IMR-90 (cell line): ENCODE measurements at regions of chr5 and their contacts with region 1.

Region 1: GRCh38 chr5:168454489-168454888 is 31.8 kb upstream of the RARS1 start:
- DNase-seq: no peak
- ATAC-seq: no peak
- H3K4me3 ChIP-seq: no peak overlapping the region
- H3K27ac ChIP-seq: no peak overlapping the region
- H3K4me1 ChIP-seq: no peaks in the 10 kb centered on the region
- H3K27me3 ChIP-seq: no peaks in the 10 kb centered on the region
- CTCF ChIP-seq: no peak
- POLR2A ChIP-seq: no peak
- RAD21 ChIP-seq: no peak

Region 2: GRCh38 chr5:168472329-168472728 is 17.8 kb after region 1 on chr5:
- CTCF ChIA-PET with region 1: no interaction called
- POLR2A ChIA-PET with region 1: interaction called, 27 read pairs
- dilution Hi-C with region 1: no loop called
- in situ Hi-C with region 1: no loop called
- intact Hi-C with region 1: no loop called
- DNase-seq: peak; percentile 96
- ATAC-seq: peak; percentile 98
- H3K4me3 ChIP-seq: no peak overlapping the region
- H3K27ac ChIP-seq: peak overlapping the region; percentile 75; the same call in 1 of the 2 replicates
- H3K4me1 ChIP-seq: peaks cover 19% of the 10 kb centered on the region
- H3K27me3 ChIP-seq: no peaks in the 10 kb centered on the region
- CTCF ChIP-seq: peak; percentile 53
- POLR2A ChIP-seq: 0 out of 2 replicates have a peak, but pooled peaks have one; percentile 41
- RAD21 ChIP-seq: peak; percentile 66

Region 3: GRCh38 chr5:169265888-169266287 is 811.4 kb after region 1 on chr5:
- CTCF ChIA-PET with region 1: no interaction called
- POLR2A ChIA-PET with region 1: no interaction called
- dilution Hi-C with region 1: no loop called
- in situ Hi-C with region 1: no loop called
- intact Hi-C with region 1: no loop called
- DNase-seq: peak; percentile 2
- ATAC-seq: no peak
- H3K4me3 ChIP-seq: no peak overlapping the region
- H3K27ac ChIP-seq: no peak overlapping the region
- H3K4me1 ChIP-seq: no peaks in the 10 kb centered on the region
- H3K27me3 ChIP-seq: no peaks in the 10 kb centered on the region
- CTCF ChIP-seq: peak; percentile 20; the same call in 1 of the 2 replicates
- POLR2A ChIP-seq: no peak
- RAD21 ChIP-seq: no peak